Naive thymus-derived CD4-positive, alpha-beta T cell (primary cell): ENCODE measurements at regions of chr12 and their contacts with region 1.

Region 1: DNA sequence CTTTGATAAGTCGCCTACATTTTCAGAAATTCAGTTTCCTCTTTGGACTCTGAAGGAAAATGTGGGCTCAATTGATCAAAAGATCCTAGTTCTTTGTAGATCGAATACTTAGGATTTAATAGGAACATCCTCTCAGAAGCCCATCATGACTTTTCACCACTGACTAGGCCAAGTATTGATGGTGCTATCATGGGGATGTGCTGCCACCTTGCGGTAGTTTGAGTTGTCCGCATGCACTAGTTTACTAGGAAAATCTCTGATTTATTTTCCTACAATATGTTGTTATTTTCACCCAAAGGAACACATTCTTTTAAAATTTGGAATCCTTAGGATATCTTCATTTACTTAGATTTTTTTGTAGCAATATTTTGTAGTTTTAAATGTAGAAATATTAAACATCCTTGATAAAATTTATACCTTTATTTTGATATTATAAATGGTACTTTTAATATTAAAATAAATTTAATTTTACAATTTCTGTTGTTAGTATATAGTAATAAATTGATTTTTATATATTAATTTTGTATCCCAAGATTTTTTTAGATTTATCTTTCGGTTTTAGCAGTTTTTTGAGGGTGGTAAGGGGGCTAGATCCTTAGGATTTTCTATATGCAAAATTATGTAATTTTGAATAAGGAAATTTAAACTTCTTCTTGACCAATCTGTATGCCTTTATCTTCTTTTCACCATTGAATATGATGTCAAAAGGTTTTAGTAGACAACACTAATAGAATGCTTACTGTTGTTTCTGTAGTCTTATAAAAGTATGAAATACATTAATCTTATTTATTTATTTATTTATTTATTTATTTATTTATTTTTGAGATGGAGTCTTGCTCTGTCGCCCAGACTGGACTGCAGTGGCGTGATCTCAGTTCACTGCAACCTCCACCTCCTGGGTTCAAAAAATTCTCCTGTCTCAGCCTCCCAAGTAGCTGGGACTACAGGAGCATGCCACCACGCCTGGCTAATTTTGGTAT is 52.9 kb upstream of the OR9K2 start:
- DNase-seq: peak; percentile 50 to 79 (median 72)
- ATAC-seq: peak; percentile 76
- H3K4me3 ChIP-seq: no peak overlapping the region
- H3K4me3 Mint-ChIP-seq: no peak overlapping the region
- H3K27ac ChIP-seq: no peak overlapping the region
- H3K27ac Mint-ChIP-seq: peak overlapping the region in 2 of 9 donors; percentile 59 to 82
- H3K4me1 ChIP-seq: no peaks in the 10 kb centered on the region
- H3K4me1 Mint-ChIP-seq: peaks cover 2 to 10% (median 9%) of the 10 kb centered on the region in 7 donors
- H3K27me3 ChIP-seq: no peaks in the 10 kb centered on the region
- H3K27me3 Mint-ChIP-seq: peaks cover 23 to 35% (median 27%) of the 10 kb centered on the region in 5 donors

Region 2: GRCh38 chr12:54603173-54603814 is 470.0 kb before region 1 on chr12:
- CTCF ChIA-PET with region 1: interaction called, 4 read pairs
- POLR2A ChIA-PET with region 1: no interaction called
- intact Hi-C with region 1: loop called (anchors 1 to 2 kb)
- DNase-seq: peak in 8 of 9 donors; percentile 20 to 68 (median 57)
- ATAC-seq: peak; percentile 93
- H3K4me3 ChIP-seq: no peak overlapping the region
- H3K4me3 Mint-ChIP-seq: peak overlapping the region in 1 of 10 donors; percentile 49
- H3K27ac ChIP-seq: no peak overlapping the region
- H3K27ac Mint-ChIP-seq: peak overlapping the region in 2 of 9 donors; percentile 5 to 33
- H3K4me1 ChIP-seq: no peaks in the 10 kb centered on the region
- H3K4me1 Mint-ChIP-seq: peaks cover 0 to 8% (median 7%) of the 10 kb centered on the region in 7 donors
- H3K27me3 ChIP-seq: no peaks in the 10 kb centered on the region
- H3K27me3 Mint-ChIP-seq: peaks cover 0 to 32% (median 12%) of the 10 kb centered on the region in 5 donors

Region 3: GRCh38 chr12:54723379-54724256 is 349.7 kb before region 1 on chr12:
- CTCF ChIA-PET with region 1: interaction called, 33 read pairs
- POLR2A ChIA-PET with region 1: interaction called, 3 read pairs
- intact Hi-C with region 1: loop called (anchors 1 to 2 kb)
- DNase-seq: peak in 7 of 9 donors; percentile 21 to 50 (median 35)
- ATAC-seq: peak; percentile 73
- H3K4me3 ChIP-seq: no peak overlapping the region
- H3K4me3 Mint-ChIP-seq: no peak overlapping the region
- H3K27ac ChIP-seq: no peak overlapping the region
- H3K27ac Mint-ChIP-seq: peak overlapping the region in 1 of 9 donors; percentile 18
- H3K4me1 ChIP-seq: no peaks in the 10 kb centered on the region
- H3K4me1 Mint-ChIP-seq: peaks cover 2 to 24% (median 10%) of the 10 kb centered on the region in 7 donors
- H3K27me3 ChIP-seq: no peaks in the 10 kb centered on the region
- H3K27me3 Mint-ChIP-seq: peaks cover 0 to 29% (median 8%) of the 10 kb centered on the region in 5 donors

Region 4: DNA sequence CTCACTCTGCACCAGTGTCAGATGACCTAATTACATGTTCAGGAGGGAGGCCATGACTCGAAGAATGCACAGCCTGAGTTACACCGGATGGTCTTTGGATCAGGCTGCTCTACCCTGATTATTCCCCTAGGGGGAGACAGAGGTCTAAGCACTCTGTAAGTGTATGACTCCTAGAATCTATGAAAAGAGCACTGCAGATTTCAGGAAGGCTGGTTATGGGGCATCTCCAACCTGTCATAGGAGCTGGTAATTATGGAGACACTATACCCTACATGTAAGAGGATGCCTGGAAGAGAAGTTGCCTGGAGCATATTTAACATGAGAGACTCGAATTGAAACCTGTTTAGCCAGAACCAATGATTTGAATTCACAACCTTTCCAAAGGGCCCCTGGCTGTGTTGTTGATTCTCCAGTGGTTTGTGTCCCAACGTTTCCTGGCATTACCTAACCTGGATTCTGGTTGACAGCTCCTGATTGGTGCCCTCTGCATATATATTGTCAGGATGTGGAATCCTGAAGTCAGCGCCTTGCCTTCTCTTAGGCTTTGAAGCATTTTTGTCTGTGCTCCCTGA is 219.3 kb before region 1 on chr12 and contains the start of gene MUCL1:
- CTCF ChIA-PET with region 1: interaction called, 38 read pairs
- POLR2A ChIA-PET with region 1: interaction called, 4 read pairs
- intact Hi-C with region 1: loop called (anchors 1 kb)
- DNase-seq: peak; percentile 21 to 79 (median 73)
- ATAC-seq: peak; percentile 99
- H3K4me3 ChIP-seq: no peak within 1 kb of the TSS
- H3K4me3 Mint-ChIP-seq: no peak within 1 kb of the TSS
- H3K27ac ChIP-seq: no peak within 1 kb of the TSS
- H3K27ac Mint-ChIP-seq: peak within 1 kb of the TSS in 2 of 9 donors; percentile 44 to 70
- H3K4me1 ChIP-seq: no peaks in the 10 kb centered on the region
- H3K4me1 Mint-ChIP-seq: peaks cover 0 to 12% (median 5%) of the 10 kb centered on the region in 7 donors
- H3K27me3 ChIP-seq: no peaks in the 10 kb centered on the region
- H3K27me3 Mint-ChIP-seq: peaks cover 0 to 4% (median 0%) of the 10 kb centered on the region in 5 donors
- total RNA-seq, gene MUCL1: not detected

Region 5: DNA sequence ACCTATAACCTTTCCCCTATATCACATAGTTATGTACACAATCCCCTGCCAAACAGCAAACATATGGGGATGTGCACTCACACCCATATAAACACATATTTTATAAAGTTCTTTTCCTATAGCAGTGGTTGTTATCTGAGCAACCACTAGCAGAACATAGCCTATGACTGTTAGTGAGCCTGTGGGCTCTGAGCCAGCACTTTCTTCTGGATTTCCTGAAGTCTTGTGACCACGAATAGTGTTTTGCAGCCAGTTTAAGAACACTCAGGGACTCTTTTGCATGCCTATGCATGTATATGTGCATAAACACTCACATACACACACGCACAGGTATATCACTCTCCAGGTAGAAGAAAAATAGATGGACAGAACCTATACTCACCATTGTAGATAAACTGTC is 105.9 kb before region 1 on chr12:
- CTCF ChIA-PET with region 1: interaction called, 52 read pairs
- POLR2A ChIA-PET with region 1: interaction called, 3 read pairs
- intact Hi-C with region 1: no loop called
- DNase-seq: peak in 5 of 9 donors; percentile 37 to 60 (median 49)
- ATAC-seq: peak; percentile 56
- H3K4me3 ChIP-seq: peak overlapping the region; percentile 2
- H3K4me3 Mint-ChIP-seq: peak overlapping the region; percentile 38 to 88 (median 79)
- H3K27ac ChIP-seq: peak overlapping the region; percentile 57
- H3K27ac Mint-ChIP-seq: peak overlapping the region; percentile 80 to 96 (median 90)
- H3K4me1 ChIP-seq: peaks cover 15 to 65% of the 10 kb centered on the region in 2 donors
- H3K4me1 Mint-ChIP-seq: peaks cover 37 to 95% (median 94%) of the 10 kb centered on the region in 7 donors
- H3K27me3 ChIP-seq: no peaks in the 10 kb centered on the region
- H3K27me3 Mint-ChIP-seq: no peaks in the 10 kb centered on the region

Region 6: DNA sequence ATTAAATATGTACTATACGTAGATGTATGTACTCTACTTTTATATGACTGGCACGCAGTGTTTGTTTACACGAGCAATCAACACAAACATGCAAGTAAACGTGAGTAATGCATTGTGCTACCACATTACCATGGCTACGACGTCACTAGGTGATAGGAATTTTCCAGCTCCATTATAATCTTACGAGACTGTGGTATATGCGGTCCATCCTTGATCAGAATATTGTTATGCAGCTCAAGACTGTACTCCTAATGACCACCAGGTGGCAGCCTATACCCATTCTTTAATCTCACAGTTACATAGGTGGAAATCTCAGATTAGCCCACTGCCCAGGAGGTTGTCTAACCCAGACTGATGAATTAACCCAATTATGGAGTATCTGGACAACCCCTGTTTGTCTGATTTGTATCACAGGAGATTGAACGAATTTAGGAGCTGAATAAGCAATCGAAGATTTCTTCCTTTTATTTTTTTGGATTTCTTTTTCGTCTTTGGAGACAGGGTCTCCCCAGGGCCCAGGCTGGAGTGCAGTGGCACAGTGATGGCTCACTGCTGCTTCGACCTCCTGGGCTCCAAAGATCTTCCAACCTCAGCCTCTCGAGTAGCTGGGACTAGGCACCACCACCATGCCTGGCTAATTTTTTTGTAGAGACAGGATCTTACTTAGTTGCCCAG is 80.0 kb before region 1 on chr12:
- CTCF ChIA-PET with region 1: interaction called, 564 read pairs
- POLR2A ChIA-PET with region 1: interaction called, 72 read pairs
- intact Hi-C with region 1: loop called (anchors 1 kb)
- DNase-seq: peak in 8 of 9 donors; percentile 42 to 83 (median 70)
- ATAC-seq: peak; percentile 91
- H3K4me3 ChIP-seq: no peak overlapping the region
- H3K4me3 Mint-ChIP-seq: peak overlapping the region in 4 of 10 donors; percentile 13 to 43 (median 29)
- H3K27ac ChIP-seq: peak overlapping the region; percentile 66
- H3K27ac Mint-ChIP-seq: peak overlapping the region in 8 of 9 donors; percentile 15 to 98 (median 71)
- H3K4me1 ChIP-seq: peaks cover 23 to 37% of the 10 kb centered on the region in 2 donors
- H3K4me1 Mint-ChIP-seq: peaks cover 34 to 59% (median 47%) of the 10 kb centered on the region in 7 donors
- H3K27me3 ChIP-seq: no peaks in the 10 kb centered on the region
- H3K27me3 Mint-ChIP-seq: peaks cover 0 to 4% (median 0%) of the 10 kb centered on the region in 5 donors

Region 7: GRCh38 chr12:55058082-55058481 is 15.3 kb before region 1 on chr12:
- CTCF ChIA-PET with region 1: interaction called, 10 read pairs
- POLR2A ChIA-PET with region 1: no interaction called
- intact Hi-C with region 1: no loop called
- DNase-seq: no peak
- ATAC-seq: no peak
- H3K4me3 ChIP-seq: no peak overlapping the region
- H3K4me3 Mint-ChIP-seq: no peak overlapping the region
- H3K27ac ChIP-seq: no peak overlapping the region
- H3K27ac Mint-ChIP-seq: no peak overlapping the region
- H3K4me1 ChIP-seq: no peaks in the 10 kb centered on the region
- H3K4me1 Mint-ChIP-seq: peaks cover 0 to 10% (median 0%) of the 10 kb centered on the region in 7 donors
- H3K27me3 ChIP-seq: no peaks in the 10 kb centered on the region
- H3K27me3 Mint-ChIP-seq: peaks cover 0 to 12% (median 0%) of the 10 kb centered on the region in 5 donors

Region 8: DNA sequence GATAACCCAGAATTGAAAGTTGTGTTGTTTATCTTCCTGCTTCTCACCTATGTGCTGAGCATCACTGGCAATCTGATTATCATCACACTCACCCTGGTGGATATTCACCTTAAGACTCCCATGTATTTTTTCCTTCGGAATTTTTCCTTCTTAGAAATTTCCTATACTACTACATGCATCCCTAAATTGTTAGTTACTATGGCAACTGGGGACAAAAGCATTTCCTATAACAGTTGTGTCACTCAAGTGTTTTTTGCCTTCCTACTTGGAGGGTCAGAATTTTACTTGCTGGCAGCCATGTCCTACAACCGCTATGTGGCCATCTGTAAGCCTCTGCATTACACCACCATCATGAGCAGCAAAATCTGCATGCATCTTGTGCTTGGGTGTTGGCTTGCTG is 189.3 kb after region 1 on chr12:
- CTCF ChIA-PET with region 1: no interaction called
- POLR2A ChIA-PET with region 1: no interaction called
- intact Hi-C with region 1: no loop called
- DNase-seq: no peak
- ATAC-seq: no peak
- H3K4me3 ChIP-seq: no peak overlapping the region
- H3K4me3 Mint-ChIP-seq: no peak overlapping the region
- H3K27ac ChIP-seq: no peak overlapping the region
- H3K27ac Mint-ChIP-seq: no peak overlapping the region
- H3K4me1 ChIP-seq: no peaks in the 10 kb centered on the region
- H3K4me1 Mint-ChIP-seq: no peaks in the 10 kb centered on the region
- H3K27me3 ChIP-seq: no peaks in the 10 kb centered on the region
- H3K27me3 Mint-ChIP-seq: peaks cover 0 to 21% (median 18%) of the 10 kb centered on the region in 5 donors

Region 9: DNA sequence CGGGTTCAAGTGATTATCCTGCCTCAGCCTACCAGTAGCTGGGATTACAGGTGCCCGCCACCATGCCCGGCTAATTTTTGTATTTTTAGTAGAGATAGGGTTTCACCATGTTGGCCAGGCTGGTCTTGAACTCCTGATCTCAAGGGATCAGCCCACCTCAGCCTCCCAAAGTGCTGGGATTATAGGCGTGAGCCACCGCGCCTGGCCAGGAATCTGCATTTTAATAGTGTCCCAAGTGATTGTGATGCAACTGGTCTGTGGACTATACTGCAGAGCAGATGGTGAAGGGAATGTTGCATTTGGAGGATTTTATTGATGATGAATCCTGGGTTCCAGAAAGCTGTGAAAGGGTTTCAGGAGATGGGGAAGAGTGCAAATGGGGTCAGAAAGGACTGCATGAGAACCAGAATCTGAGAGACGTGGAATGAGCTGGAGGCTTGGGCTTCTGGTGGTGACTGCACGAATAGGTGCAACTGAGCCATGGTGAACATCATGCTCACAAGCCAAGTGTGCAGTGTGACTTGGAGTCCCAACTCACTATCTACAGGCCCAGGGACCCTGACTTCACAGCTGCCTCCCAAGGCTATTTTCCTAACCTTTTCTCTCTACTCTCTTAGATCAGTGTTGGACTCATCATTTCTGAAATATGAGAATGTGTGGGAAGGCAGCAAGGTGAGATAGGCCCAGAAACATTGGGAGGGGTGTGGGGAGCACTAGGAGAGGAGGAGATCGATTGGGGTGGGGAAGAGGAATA is 972.9 kb after region 1 on chr12:
- CTCF ChIA-PET with region 1: no interaction called
- POLR2A ChIA-PET with region 1: no interaction called
- intact Hi-C with region 1: no loop called
- DNase-seq: no peak
- ATAC-seq: no peak
- H3K4me3 ChIP-seq: no peak overlapping the region
- H3K4me3 Mint-ChIP-seq: no peak overlapping the region
- H3K27ac ChIP-seq: peak overlapping the region; percentile 42
- H3K27ac Mint-ChIP-seq: peak overlapping the region in 6 of 9 donors; percentile 47 to 83 (median 64)
- H3K4me1 ChIP-seq: peaks cover 13 to 18% of the 10 kb centered on the region in 2 donors
- H3K4me1 Mint-ChIP-seq: peaks cover 14 to 37% (median 32%) of the 10 kb centered on the region in 7 donors
- H3K27me3 ChIP-seq: no peaks in the 10 kb centered on the region
- H3K27me3 Mint-ChIP-seq: no peaks in the 10 kb centered on the region